MCF 10A (cell line): ENCODE measurements at regions of chr9 and their contacts with region 1.

Region 1: DNA sequence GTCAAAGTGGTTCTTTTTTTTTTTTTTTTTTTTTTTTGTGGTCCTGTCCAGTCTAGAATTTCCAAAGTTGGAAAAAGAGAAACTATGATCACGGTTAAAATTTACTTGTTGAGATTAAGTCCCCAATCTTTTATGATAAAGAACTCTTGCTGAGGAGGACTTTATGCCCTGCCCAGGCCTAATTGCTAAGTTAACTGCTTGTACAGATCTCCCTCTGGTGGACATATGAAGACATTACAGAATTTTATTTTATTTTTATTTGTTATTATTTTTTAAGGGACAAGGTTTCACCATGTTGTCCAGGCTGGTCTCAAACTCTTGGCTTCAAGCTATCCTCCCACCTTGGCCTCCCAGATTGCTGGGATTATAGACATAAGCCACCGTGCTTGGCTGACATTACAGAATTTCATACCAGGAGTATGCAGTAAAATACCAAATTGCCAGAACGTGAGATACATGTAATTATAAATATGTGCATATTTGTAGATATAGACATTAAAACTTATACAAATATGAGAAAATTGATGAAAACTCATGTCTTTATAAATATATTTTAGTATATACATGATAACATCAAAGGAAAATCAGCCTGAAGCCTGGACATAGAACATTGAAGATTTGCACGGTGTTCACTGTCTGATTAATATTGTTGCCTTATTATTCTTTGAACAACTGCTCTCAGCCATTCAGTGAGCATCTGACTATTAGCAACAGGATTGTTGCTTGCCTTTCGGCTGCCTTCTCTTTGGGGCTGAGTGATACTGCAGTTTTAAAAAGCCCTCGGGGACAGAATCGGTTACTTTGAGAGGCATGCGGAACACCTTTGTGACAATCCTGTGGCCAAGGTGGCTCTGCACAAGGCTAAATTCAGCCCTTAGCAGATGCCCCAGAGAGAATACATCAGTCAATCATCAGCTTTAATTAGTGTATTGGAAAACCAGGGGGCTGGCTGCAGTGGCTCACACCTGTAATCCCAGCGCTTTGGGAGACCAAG is 91.0 kb downstream of the RFK start:
- DNase-seq: peak; percentile 56
- H3K4me3 Mint-ChIP-seq: no peak overlapping the region
- H3K27ac Mint-ChIP-seq: no peak overlapping the region
- H3K4me1 Mint-ChIP-seq: no peaks in the 10 kb centered on the region
- H3K27me3 Mint-ChIP-seq: no peaks in the 10 kb centered on the region
- CTCF ChIP-seq: peak; percentile 59

Region 2: GRCh38 chr9:75185585-75186170 is 1117.6 kb before region 1 on chr9:
- CTCF ChIA-PET with region 1: interaction called, 4 read pairs
- POLR2A ChIA-PET with region 1: no interaction called
- intact Hi-C with region 1: loop called (anchors 5 kb)
- DNase-seq: peak; percentile 64
- H3K4me3 Mint-ChIP-seq: no peak overlapping the region
- H3K27ac Mint-ChIP-seq: no peak overlapping the region
- H3K4me1 Mint-ChIP-seq: peaks cover 5% of the 10 kb centered on the region
- H3K27me3 Mint-ChIP-seq: no peaks in the 10 kb centered on the region
- CTCF ChIP-seq: peak; percentile 54

Region 3: GRCh38 chr9:75265525-75265972 is 1037.7 kb before region 1 on chr9:
- CTCF ChIA-PET with region 1: interaction called, 9 read pairs
- POLR2A ChIA-PET with region 1: no interaction called
- intact Hi-C with region 1: loop called (anchors 2 kb)
- DNase-seq: peak; percentile 66
- H3K4me3 Mint-ChIP-seq: no peak overlapping the region
- H3K27ac Mint-ChIP-seq: no peak overlapping the region
- H3K4me1 Mint-ChIP-seq: no peaks in the 10 kb centered on the region
- H3K27me3 Mint-ChIP-seq: no peaks in the 10 kb centered on the region
- CTCF ChIP-seq: peak; percentile 75

Region 4: DNA sequence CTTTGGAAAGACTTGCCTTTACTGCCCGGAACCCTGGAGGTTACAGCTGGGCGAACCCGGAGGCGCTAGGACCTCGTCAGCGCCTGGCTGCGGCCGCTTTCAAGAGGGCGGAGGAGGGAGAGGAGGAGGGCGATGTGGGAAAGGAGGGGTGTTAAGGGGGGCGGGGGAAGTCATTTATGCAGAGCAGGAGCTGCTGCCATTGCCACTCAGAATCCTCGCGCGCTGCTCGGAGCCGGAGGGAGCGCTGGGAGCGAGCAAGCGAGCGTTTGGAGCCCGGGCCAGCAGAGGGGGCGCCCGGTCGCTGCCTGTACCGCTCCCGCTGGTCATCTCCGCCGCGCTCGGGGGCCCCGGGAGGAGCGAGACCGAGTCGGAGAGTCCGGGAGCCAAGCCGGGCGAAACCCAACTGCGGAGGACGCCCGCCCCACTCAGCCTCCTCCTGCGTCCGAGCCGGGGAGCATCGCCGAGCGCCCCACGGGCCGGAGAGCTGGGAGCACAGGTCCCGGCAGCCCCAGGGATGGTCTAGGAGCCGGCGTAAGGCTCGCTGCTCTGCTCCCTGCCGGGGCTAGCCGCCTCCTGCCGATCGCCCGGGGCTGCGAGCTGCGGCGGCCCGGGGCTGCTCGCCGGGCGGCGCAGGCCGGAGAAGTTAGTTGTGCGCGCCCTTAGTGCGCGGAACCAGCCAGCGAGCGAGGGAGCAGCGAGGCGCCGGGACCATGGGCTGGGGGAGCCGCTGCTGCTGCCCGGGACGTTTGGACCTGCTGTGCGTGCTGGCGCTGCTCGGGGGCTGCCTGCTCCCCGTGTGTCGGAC is 412.6 kb before region 1 on chr9 and contains the start of gene PCSK5:
- CTCF ChIA-PET with region 1: interaction called, 5 read pairs
- POLR2A ChIA-PET with region 1: no interaction called
- intact Hi-C with region 1: loop called (anchors 10 kb)
- DNase-seq: peak; percentile 85
- H3K4me3 Mint-ChIP-seq: peak within 1 kb of the TSS; percentile 82
- H3K27ac Mint-ChIP-seq: no peak within 1 kb of the TSS
- H3K4me1 Mint-ChIP-seq: peaks cover 13% of the 10 kb centered on the region
- H3K27me3 Mint-ChIP-seq: peaks cover 28% of the 10 kb centered on the region
- CTCF ChIP-seq: no peak
- total RNA-seq, gene PCSK5: 0.20 TPM in 1 of 2 replicates, not detected in the other

Region 5: GRCh38 chr9:76292246-76292645 is 11.0 kb before region 1 on chr9:
- CTCF ChIA-PET with region 1: interaction called, 57 read pairs
- POLR2A ChIA-PET with region 1: no interaction called
- intact Hi-C with region 1: no loop called
- DNase-seq: peak; percentile 30
- H3K4me3 Mint-ChIP-seq: no peak overlapping the region
- H3K27ac Mint-ChIP-seq: no peak overlapping the region
- H3K4me1 Mint-ChIP-seq: no peaks in the 10 kb centered on the region
- H3K27me3 Mint-ChIP-seq: no peaks in the 10 kb centered on the region
- CTCF ChIP-seq: no peak

Region 6: DNA sequence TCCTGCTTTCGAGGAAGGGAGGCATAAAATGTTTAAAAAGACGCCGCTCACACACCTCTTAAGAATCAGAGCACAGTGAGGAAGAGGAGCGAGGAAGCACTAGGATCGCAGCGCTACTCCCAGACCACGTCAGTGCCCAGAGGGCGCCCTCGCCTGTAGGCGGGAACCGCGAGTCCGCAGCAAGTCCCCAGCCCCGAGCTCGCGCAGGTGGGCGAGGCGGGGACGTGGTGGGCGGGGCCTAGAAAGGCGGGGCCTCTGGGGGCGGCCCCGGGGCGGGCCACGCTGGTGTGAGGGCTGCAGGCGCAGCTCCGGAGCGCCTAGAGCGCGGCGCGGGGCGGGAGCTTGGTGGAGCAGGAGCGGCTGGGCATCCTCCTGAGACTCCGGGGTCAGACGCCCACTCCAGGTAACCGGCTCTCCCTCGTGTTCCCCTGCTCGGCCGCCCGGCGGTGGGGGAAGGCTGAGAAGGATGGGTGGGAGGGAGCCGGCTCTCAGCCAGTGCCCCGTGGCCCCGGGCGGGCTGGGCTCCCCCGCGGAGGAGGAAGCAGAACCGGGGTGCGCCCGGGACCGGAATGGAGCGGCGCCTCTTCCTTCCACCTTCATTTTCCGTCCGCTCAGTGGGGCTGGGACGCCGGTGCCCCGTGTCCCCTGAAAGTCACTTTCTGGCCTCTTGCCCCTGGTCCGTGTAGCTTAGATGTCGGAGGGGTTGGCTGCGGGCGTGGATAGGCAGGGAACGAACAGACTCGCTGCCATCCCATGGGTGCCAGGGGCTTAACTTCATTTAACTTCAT is 155.9 kb after region 1 on chr9 and contains the start of gene GCNT1:
- CTCF ChIA-PET with region 1: no interaction called
- POLR2A ChIA-PET with region 1: no interaction called
- intact Hi-C with region 1: no loop called
- DNase-seq: peak; percentile 90
- H3K4me3 Mint-ChIP-seq: peak within 1 kb of the TSS; percentile 84
- H3K27ac Mint-ChIP-seq: peak within 1 kb of the TSS; percentile 6
- H3K4me1 Mint-ChIP-seq: peaks cover 14% of the 10 kb centered on the region
- H3K27me3 Mint-ChIP-seq: no peaks in the 10 kb centered on the region
- CTCF ChIP-seq: peak; percentile 15
- total RNA-seq, gene GCNT1: 11.5 and 12.4 TPM in 2 replicates

Region 7: GRCh38 chr9:76704593-76705204 is 401.5 kb after region 1 on chr9:
- CTCF ChIA-PET with region 1: interaction called, 4 read pairs
- POLR2A ChIA-PET with region 1: no interaction called
- intact Hi-C with region 1: loop called (anchors 2 kb)
- DNase-seq: peak; percentile 78
- H3K4me3 Mint-ChIP-seq: no peak overlapping the region
- H3K27ac Mint-ChIP-seq: no peak overlapping the region
- H3K4me1 Mint-ChIP-seq: peaks cover 14% of the 10 kb centered on the region
- H3K27me3 Mint-ChIP-seq: peaks cover 36% of the 10 kb centered on the region
- CTCF ChIP-seq: peak; percentile 69